Naive thymus-derived CD4-positive, alpha-beta T cell (primary cell): ENCODE measurements at regions of chr3 and their contacts with region 1.

Region 1: GRCh38 chr3:56894881-56895431 is 93.2 kb upstream of the ARHGEF3 start:
- DNase-seq: peak in 2 of 9 donors; percentile 21 to 33
- ATAC-seq: peak; percentile 62
- H3K4me3 ChIP-seq: no peak overlapping the region
- H3K4me3 Mint-ChIP-seq: peak overlapping the region; percentile 29 to 72 (median 45)
- H3K27ac ChIP-seq: peak overlapping the region; percentile 46
- H3K27ac Mint-ChIP-seq: peak overlapping the region in 8 of 9 donors; percentile 21 to 74 (median 61)
- H3K4me1 ChIP-seq: peaks cover 20 to 39% of the 10 kb centered on the region in 2 donors
- H3K4me1 Mint-ChIP-seq: peaks cover 29 to 86% (median 70%) of the 10 kb centered on the region in 7 donors
- H3K27me3 ChIP-seq: no peaks in the 10 kb centered on the region
- H3K27me3 Mint-ChIP-seq: no peaks in the 10 kb centered on the region

Region 2: DNA sequence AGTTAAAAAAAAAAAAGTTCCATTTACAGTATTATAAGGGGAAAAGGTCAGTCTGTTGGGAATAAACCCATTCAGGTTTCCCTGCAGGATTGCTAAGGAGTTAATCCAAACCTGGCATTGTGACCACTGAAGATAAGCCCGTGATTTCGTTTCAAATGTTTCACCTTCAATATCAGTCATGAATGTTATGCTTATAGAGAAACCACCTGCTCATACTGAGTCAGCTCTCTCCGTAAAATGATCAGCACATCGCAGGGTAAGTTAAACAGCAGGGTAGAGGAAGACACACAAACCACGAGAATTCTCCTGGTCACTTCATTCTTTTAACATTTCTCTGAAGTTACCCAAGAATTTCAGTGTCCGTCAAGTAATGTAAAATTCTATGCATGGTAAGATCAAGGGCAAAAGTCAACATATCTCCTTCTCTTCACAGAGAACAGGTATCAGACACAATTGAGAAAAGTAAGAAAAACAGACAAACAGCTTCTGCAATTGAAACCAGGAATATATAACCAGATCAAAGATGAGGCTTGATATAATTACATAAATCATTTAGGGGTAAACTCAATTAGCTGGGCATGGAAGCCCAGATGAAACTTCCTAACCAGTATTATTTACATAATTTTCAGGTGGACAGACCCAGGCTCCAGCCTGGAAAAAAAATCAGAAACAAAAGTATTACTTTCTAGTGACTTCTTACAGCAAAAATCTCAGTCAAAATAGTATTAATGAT is 25.6 kb before region 1 on chr3:
- CTCF ChIA-PET with region 1: no interaction called
- POLR2A ChIA-PET with region 1: no interaction called
- intact Hi-C with region 1: loop called in 1 of 2 experiments (anchors 1 kb)
- DNase-seq: no peak
- ATAC-seq: no peak
- H3K4me3 ChIP-seq: no peak overlapping the region
- H3K4me3 Mint-ChIP-seq: peak overlapping the region in 8 of 10 donors; percentile 6 to 81 (median 51)
- H3K27ac ChIP-seq: no peak overlapping the region
- H3K27ac Mint-ChIP-seq: peak overlapping the region in 7 of 9 donors; percentile 4 to 82 (median 60)
- H3K4me1 ChIP-seq: peaks cover 0 to 14% of the 10 kb centered on the region in 2 donors
- H3K4me1 Mint-ChIP-seq: peaks cover 35 to 71% (median 60%) of the 10 kb centered on the region in 7 donors
- H3K27me3 ChIP-seq: no peaks in the 10 kb centered on the region
- H3K27me3 Mint-ChIP-seq: no peaks in the 10 kb centered on the region

Region 3: GRCh38 chr3:56878074-56878473 is 16.9 kb before region 1 on chr3:
- CTCF ChIA-PET with region 1: no interaction called
- POLR2A ChIA-PET with region 1: interaction called, 6 read pairs
- intact Hi-C with region 1: loop called in 1 of 2 experiments (anchors 2 kb)
- DNase-seq: peak in 7 of 9 donors; percentile 29 to 65 (median 49)
- ATAC-seq: peak; percentile 84
- H3K4me3 ChIP-seq: no peak overlapping the region
- H3K4me3 Mint-ChIP-seq: peak overlapping the region; percentile 48 to 85 (median 73)
- H3K27ac ChIP-seq: peak overlapping the region; percentile 57
- H3K27ac Mint-ChIP-seq: peak overlapping the region; percentile 79 to 95 (median 91)
- H3K4me1 ChIP-seq: peaks cover 10 to 57% of the 10 kb centered on the region in 2 donors
- H3K4me1 Mint-ChIP-seq: peaks cover 33 to 88% (median 78%) of the 10 kb centered on the region in 7 donors
- H3K27me3 ChIP-seq: no peaks in the 10 kb centered on the region
- H3K27me3 Mint-ChIP-seq: no peaks in the 10 kb centered on the region